CD4-positive, alpha-beta T cell (primary cell): ENCODE measurements at regions of chr1 and their contacts with region 1.

Region 1: GRCh38 chr1:110668549-110668948 is 6.2 kb downstream of the KCNA3 start:
- DNase-seq: peak in 4 of 14 experiments; percentile 5 to 68 (median 54)
- ATAC-seq: peak; percentile 23
- H3K4me3 ChIP-seq: peak overlapping the region; percentile 99
- H3K4me3 Mint-ChIP-seq: peak overlapping the region; percentile 80
- H3K27ac ChIP-seq: peak overlapping the region; percentile 33 to 39
- H3K27ac Mint-ChIP-seq: no peak overlapping the region
- H3K4me1 ChIP-seq: peaks cover 26% of the 10 kb centered on the region
- H3K4me1 Mint-ChIP-seq: peaks cover 52% of the 10 kb centered on the region
- H3K27me3 ChIP-seq: no peaks in the 10 kb centered on the region
- H3K27me3 Mint-ChIP-seq: no peaks in the 10 kb centered on the region
- CTCF ChIP-seq: no peak

Region 2: GRCh38 chr1:110328274-110328673 is 340.3 kb before region 1 on chr1:
- CTCF ChIA-PET with region 1: no interaction called
- POLR2A ChIA-PET with region 1: no interaction called
- intact Hi-C with region 1: no loop called
- DNase-seq: no peak
- ATAC-seq: no peak
- H3K4me3 ChIP-seq: no peak overlapping the region
- H3K4me3 Mint-ChIP-seq: no peak overlapping the region
- H3K27ac ChIP-seq: no peak overlapping the region
- H3K27ac Mint-ChIP-seq: no peak overlapping the region
- H3K4me1 ChIP-seq: no peaks in the 10 kb centered on the region
- H3K4me1 Mint-ChIP-seq: no peaks in the 10 kb centered on the region
- H3K27me3 ChIP-seq: no peaks in the 10 kb centered on the region
- H3K27me3 Mint-ChIP-seq: no peaks in the 10 kb centered on the region
- CTCF ChIP-seq: no peak

Region 3: DNA sequence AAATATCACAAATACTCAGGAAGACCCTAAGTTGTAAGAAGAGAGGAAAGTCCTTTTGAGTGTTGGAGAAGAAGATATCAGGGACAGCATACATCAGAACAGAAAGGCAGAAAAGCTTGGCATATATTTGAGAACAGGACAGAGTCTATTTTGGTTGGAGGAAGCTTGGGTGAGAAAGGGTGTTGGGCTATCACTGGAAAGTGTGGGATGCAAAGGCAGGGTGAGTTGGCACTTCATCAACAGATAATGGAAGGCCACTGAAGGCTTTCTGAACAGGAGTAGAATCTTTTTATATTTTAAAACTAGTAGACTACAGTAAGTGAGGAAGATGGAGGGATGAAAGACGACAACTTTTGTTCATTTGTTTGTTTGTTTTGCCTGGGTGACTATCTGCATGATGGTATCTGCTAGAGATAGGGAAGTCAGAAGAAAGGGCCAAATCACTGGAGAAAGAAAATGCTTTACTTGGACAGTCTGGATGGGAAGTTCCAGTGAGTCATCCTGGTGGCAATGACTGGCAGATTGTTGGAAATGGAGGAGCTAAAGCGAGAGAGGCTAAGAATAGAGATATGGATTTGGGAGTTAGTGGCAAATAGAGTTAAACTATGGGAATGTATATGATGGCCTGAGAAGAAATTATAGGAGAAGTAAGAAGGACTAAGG is 28.7 kb before region 1 on chr1:
- CTCF ChIA-PET with region 1: interaction called, 6 read pairs
- POLR2A ChIA-PET with region 1: interaction called, 94 read pairs
- intact Hi-C with region 1: loop called in 1 of 2 experiments (anchors 2 kb)
- DNase-seq: peak in 2 of 14 experiments; percentile 57 to 68
- ATAC-seq: no peak
- H3K4me3 ChIP-seq: no peak overlapping the region
- H3K4me3 Mint-ChIP-seq: peak overlapping the region; percentile 17
- H3K27ac ChIP-seq: peak overlapping the region in 1 of 2 donors; percentile 32
- H3K27ac Mint-ChIP-seq: peak overlapping the region; percentile 88
- H3K4me1 ChIP-seq: peaks cover 95% of the 10 kb centered on the region
- H3K4me1 Mint-ChIP-seq: peaks cover 92% of the 10 kb centered on the region
- H3K27me3 ChIP-seq: no peaks in the 10 kb centered on the region
- H3K27me3 Mint-ChIP-seq: no peaks in the 10 kb centered on the region
- CTCF ChIP-seq: no peak